Activated T-helper 1 cell treated with anti-CD3 and anti-CD28 coated beads, Interleukin-12 subunit alpha, Interleukin-12 subunit beta, Interleukin-2, Interleukin-4 antibody, amounts not matched to agents 30 ng/mL and 10 ng/mL and 1 ng/mL, durations not matched to agents 14 hours and 24 hours and 36 hours (primary cell): ENCODE measurements at regions of chr22 and their contacts with region 1.

Region 1: DNA sequence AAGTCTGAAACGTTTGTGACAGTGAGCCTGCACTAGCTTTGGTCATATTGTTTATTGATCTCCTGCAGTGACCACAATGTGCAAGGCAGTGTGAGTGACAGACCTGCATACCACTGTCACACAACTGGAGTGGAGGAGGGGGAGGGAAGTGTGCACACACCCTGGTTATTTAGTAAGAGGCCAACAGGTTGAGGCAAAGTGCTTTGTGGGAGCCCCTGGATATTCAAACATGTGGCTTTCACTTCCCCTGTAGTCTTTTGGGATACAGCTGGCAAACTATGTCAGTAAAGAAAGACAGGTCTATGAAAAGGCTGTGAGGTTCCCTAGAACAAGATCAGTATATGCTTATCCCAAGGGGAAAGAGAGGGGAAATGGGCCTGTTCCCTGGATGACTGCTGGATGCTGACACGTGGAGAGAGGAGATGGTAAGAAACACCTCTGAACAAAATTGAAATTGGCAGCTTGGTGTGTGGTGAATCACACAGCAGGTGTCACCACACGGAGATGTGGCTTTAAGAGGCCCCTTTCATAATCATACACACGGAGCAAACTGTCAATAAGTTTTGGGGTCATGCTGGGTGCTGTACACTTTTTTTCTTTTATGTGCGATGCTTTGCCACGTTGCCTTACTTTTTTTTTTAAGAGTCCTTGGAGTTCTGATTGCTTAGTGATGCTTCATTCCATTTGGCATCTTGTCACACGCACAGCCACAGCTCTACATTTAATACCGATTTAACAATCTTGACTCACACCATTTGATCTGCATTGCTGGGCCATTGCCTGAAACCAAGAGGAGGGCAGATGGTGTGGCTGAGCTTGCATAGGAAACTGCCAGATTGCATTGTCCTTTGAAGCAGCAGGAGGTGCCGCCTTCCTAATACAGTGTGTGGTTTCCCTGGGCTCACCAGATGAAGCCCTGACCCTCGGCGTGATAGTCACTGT is 11.3 kb downstream of the OSBP2 start:
- DNase-seq: no peak
- H3K4me3 Mint-ChIP-seq: no peak overlapping the region
- H3K27ac Mint-ChIP-seq: peak overlapping the region; percentile 41
- H3K4me1 Mint-ChIP-seq: peaks cover 31% of the 10 kb centered on the region
- H3K27me3 Mint-ChIP-seq: no peaks in the 10 kb centered on the region

Region 2: DNA sequence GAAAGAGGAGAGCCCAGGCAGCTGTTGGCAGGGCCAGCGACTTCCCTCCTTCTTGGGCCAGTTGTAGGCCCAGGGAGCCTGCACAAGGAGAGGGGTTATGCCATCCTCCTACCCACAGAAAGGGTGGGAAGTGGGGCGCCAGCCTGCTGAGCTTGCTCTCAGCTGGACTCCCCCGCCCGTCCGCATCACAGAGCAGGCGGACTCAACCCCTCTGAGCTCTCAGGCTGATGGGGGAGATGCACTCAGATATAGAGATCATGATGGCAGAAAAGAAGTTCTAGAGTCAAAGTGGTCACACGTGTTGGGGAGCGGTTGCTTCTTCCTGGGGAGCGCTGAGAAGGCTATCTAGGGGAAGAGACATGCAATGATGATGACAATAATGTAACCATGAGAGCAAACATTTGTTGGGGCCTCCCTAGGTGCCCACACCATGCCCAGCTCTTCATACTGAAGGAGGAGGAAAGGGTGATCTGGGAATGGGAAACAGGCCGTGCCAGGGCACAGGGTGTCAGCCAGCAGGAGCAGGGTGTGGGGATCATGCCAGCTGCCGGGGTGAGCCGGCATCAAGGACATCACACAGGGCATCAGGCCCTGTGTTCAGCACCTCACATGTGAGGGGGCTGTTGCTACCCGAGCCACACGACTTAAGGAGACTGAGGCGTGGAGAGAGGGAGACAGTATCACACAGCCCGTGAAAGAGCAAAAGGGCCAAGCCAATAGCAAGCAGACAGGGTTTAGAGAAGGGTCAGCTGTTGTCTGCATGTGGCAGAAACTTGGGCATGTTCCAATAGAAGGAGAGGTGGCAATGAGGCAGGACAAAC is 62.7 kb before region 1 on chr22:
- intact Hi-C with region 1: loop called (anchors 5 kb)
- DNase-seq: no peak
- H3K4me3 Mint-ChIP-seq: peak overlapping the region; percentile 43
- H3K27ac Mint-ChIP-seq: peak overlapping the region; percentile 93
- H3K4me1 Mint-ChIP-seq: peaks cover 35% of the 10 kb centered on the region
- H3K27me3 Mint-ChIP-seq: no peaks in the 10 kb centered on the region

Region 3: DNA sequence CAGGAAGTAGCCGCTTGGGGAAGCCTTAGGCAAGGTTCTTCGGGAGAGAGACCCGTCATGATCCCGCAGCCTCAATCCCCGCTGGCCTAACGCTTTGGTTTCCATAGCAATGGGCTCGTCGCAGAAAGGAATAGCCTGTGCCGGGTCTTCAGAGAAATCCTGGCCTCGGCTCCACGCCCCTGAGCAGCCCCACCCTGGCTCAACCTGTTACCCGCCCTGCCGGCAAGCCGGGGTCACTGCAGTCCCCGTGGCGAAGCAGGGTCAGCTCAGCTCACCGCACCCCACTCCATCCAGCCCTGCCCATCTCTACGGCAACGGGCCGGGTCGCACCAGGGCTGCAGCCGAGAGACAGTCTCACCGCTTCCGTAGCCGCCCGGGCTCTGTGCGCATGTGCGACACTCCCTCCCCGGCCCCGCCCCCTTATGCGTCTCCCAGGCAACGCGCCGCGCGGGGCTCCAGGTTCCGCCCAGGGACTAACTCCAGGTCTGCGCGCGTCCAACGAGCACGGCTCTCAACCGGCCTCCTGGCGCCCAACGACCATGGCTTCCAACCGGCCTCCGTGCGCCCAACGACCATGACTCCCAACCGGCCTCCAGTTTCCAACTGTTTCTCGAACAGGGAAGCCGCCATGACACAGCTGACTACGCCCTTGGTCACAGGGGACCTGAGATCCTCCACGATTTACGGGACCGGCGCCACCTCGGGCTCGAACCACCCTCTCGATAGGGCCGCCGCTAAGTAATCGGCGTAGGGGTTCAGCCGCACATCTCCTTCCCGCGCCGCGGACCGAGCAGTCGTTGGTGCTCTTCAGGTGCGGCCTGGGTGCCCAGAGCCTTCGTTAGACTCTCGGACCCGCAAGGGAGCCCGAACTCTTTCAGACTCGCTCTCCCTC is 38.2 kb before region 1 on chr22 and contains the start of gene DUSP18:
- intact Hi-C with region 1: no loop called
- DNase-seq: peak; percentile 92
- H3K4me3 Mint-ChIP-seq: peak within 1 kb of the TSS; percentile 93
- H3K27ac Mint-ChIP-seq: peak within 1 kb of the TSS; percentile 83
- H3K4me1 Mint-ChIP-seq: peaks cover 32% of the 10 kb centered on the region
- H3K27me3 Mint-ChIP-seq: peaks cover 7% of the 10 kb centered on the region
- total RNA-seq, gene DUSP18: 9.6 and 9.8 TPM in 2 replicates

Region 4: GRCh38 chr22:30717331-30717921 is 11.4 kb after region 1 on chr22:
- intact Hi-C with region 1: no loop called
- DNase-seq: no peak
- H3K4me3 Mint-ChIP-seq: no peak overlapping the region
- H3K27ac Mint-ChIP-seq: peak overlapping the region; percentile 48
- H3K4me1 Mint-ChIP-seq: peaks cover 13% of the 10 kb centered on the region
- H3K27me3 Mint-ChIP-seq: peaks cover under 1% of the 10 kb centered on the region